ENCODE measurements at regions of chr9 and their contacts with region 1.

Region 1: DNA sequence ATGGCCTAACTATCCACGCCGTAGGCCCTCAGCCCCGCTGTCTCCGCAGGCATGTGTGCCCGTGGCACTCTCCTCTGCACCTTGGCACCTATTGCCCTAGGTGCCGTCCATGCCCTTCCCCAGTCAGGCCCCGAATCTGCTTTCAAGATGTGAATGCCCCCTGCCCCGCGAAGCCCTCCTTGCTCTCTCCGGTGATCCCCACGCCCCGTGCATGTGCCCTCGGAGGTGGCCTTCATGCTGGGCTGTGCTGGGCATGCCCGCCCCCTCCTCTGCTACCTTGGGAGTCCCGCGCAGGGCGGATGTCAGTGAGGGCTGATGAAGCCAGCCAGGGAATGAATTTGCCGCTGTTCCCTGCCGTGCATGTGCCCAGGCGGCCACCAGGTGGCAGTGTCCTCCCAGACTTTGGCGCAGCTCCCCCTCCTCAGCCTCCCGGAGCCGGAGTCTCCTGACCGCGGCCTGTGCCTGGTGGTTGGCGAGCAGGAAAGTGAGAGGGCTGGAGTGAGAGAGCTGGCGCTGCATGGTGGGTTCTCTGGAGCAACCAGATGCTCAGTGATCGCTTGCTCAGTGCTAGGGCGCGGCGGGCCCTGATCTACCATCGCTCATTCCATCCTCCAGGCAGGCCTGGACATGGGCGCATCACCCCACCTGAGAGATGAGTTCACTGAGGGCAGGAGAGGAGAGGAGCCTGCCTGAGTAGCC is 112.9 kb upstream of the LMX1B start:
- DNase-seq: no peak
- H3K4me3 ChIP-seq: no peak overlapping the region
- H3K27me3 ChIP-seq: peaks cover 2% of the 10 kb centered on the region; the same call in 1 of the 2 replicates
- CTCF ChIP-seq: peak; percentile 97

Region 2: DNA sequence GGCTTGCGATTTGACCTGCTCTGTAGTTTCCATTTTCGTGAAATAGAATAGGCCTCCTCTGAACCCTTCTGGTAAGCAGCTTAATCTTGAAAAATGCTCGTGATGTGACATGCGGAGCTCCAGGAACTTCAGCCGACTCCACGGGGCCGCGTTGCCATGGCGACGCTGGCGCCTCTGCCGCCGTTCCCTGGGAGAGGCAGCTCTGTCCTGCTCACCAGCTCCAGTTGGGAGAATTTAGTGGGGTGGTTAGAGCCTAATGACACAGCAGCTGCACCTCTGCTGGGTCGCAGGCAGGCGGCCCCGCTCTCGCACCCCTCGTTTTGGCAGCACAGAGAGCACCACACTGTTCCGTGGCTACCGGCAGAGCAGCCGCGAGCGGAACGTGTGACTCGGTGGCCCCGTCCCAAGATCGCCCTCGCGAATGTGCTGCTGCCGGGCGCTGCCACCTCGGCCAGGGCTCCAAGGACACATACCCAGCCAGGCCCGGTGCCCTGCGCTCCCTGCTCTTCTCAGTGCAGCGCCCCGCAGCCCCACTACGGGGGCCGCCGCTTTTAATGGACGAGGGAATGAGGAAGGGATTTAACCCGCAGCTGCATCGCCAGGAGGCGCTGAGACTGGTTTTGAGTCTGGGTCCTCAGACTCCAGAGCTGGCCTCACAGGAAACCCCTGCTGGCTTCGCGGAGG is 18.3 kb before region 1 on chr9:
- CTCF ChIA-PET with region 1: interaction called, 11 read pairs
- POLR2A ChIA-PET with region 1: no interaction called
- DNase-seq: no peak
- H3K4me3 ChIP-seq: no peak overlapping the region; the same call in 1 of the 2 replicates
- H3K27me3 ChIP-seq: no peaks in the 10 kb centered on the region
- CTCF ChIP-seq: no peak

Region 3: DNA sequence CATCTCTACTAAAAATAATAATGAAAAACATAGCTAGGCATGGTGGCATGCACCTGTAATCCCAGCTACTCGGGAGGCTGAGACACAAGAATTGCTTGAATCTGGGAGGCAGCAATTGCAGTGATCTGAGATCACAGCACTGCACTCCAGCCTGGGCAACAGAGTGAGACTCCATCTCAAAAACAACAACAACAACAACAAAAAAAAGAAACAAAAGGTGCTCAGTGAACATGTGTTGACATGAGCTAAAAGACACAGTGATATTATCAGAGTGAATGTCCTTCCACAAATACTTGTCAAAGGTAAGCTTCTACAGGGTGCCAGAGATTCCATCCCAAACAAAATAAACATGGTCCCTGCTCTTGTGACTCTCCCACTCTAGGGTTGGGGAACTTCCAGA is 37.7 kb after region 1 on chr9:
- CTCF ChIA-PET with region 1: interaction called, 11 read pairs
- POLR2A ChIA-PET with region 1: no interaction called
- DNase-seq: no peak
- H3K4me3 ChIP-seq: no peak overlapping the region
- H3K27me3 ChIP-seq: peaks cover 13% of the 10 kb centered on the region
- CTCF ChIP-seq: no peak

Region 4: DNA sequence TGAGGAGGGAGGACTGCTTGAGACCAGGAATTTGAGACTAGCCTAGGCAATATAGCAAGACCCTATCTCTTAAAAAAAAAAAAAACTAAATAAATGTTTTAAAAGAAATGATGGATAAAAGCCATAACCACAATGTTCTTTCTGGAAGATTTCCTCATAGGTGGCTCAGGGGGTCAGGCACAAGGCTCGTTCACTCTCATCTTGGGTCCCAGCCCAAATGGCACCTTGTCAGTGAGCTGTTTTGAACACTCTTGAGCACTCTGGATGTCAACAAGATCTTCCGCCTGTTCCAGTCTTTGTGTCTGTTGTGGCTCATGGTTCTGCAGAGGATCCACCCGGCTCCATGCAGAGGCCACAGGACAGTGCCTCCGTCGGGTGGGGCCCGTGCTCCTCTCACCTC is 77.2 kb after region 1 on chr9:
- CTCF ChIA-PET with region 1: interaction called, 10 read pairs
- POLR2A ChIA-PET with region 1: no interaction called
- DNase-seq: no peak
- H3K4me3 ChIP-seq: no peak overlapping the region
- H3K27me3 ChIP-seq: no peaks in the 10 kb centered on the region
- CTCF ChIP-seq: no peak